Natural killer cell (primary cell): ENCODE measurements at regions of chr4 and their contacts with region 1.

Region 1: GRCh38 chr4:147831551-147832177 is 99.8 kb downstream of the ARHGAP10 start:
- DNase-seq: peak in 1 of 2 donors; percentile 8
- ATAC-seq: peak in 2 of 3 donors; percentile 13 to 27
- H3K4me3 ChIP-seq: no peak overlapping the region
- H3K4me3 Mint-ChIP-seq: peak overlapping the region; percentile 29
- H3K27ac ChIP-seq: peak overlapping the region; percentile 13
- H3K27ac Mint-ChIP-seq: peak overlapping the region; percentile 47 to 71
- H3K4me1 ChIP-seq: peaks cover 26% of the 10 kb centered on the region
- H3K4me1 Mint-ChIP-seq: peaks cover 72 to 81% of the 10 kb centered on the region in 2 donors
- H3K27me3 ChIP-seq: no peaks in the 10 kb centered on the region
- H3K27me3 Mint-ChIP-seq: no peaks in the 10 kb centered on the region
- CTCF ChIP-seq: no peak

Region 2: DNA sequence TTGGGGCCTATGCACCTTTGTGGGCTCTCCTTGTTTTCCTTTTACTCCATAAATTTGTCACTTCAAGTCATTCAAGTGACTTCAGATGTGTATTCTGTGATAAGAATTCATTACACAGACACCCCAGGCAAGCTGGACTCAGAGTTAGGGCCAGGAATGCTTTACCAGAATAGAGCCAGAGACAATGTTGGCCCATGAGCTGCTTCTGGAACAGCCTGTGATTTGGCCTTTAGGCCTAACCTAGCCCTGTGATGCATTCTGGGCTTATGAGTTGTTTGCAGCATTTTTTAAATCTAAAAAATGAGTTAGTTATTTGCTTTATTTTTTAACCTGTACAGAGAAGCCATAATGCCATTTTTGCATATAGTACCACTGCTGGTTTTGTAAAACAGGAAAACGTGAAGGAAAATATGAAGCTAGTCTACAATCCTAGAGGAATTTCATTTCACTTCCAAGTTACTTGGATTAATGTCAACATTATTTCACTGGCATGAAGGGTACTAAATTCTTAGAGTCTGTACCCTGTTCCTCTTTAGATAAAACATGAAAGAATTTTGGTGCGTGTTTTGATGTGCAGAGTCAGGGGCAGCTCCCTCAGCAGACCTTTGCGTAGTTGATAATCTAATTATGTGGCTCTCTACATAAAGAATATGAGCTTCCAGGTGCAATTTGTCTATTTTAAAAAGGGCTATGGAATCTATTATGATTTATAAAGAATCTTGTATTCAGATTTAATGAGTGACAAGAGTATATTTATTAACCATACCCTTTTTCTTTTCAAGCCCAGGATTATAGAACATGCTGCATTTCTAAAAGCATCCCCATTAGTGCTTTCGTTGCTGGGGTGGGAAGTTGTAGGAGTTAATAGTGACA is 15.0 kb before region 1 on chr4:
- intact Hi-C with region 1: loop called (anchors 2 kb)
- DNase-seq: no peak
- ATAC-seq: no peak
- H3K4me3 ChIP-seq: no peak overlapping the region
- H3K4me3 Mint-ChIP-seq: peak overlapping the region; percentile 40
- H3K27ac ChIP-seq: no peak overlapping the region
- H3K27ac Mint-ChIP-seq: peak overlapping the region; percentile 56 to 81
- H3K4me1 ChIP-seq: peaks cover 17% of the 10 kb centered on the region
- H3K4me1 Mint-ChIP-seq: peaks cover 42 to 54% of the 10 kb centered on the region in 2 donors
- H3K27me3 ChIP-seq: no peaks in the 10 kb centered on the region
- H3K27me3 Mint-ChIP-seq: no peaks in the 10 kb centered on the region
- CTCF ChIP-seq: no peak

Region 3: GRCh38 chr4:148094149-148094548 is 262.5 kb after region 1 on chr4:
- intact Hi-C with region 1: no loop called
- DNase-seq: no peak
- ATAC-seq: no peak
- H3K4me3 ChIP-seq: no peak overlapping the region
- H3K4me3 Mint-ChIP-seq: no peak overlapping the region
- H3K27ac ChIP-seq: no peak overlapping the region
- H3K27ac Mint-ChIP-seq: no peak overlapping the region
- H3K4me1 ChIP-seq: no peaks in the 10 kb centered on the region
- H3K4me1 Mint-ChIP-seq: no peaks in the 10 kb centered on the region
- H3K27me3 ChIP-seq: no peaks in the 10 kb centered on the region
- H3K27me3 Mint-ChIP-seq: no peaks in the 10 kb centered on the region
- CTCF ChIP-seq: no peak